ENCODE measurements at regions of chr5 and their contacts with region 1.

Region 1: GRCh38 chr5:154189819-154190594 is 526 bp upstream of the GALNT10 start:
- DNase-seq: peak; percentile 54 to 85
- H3K4me3 ChIP-seq: peak overlapping the region; percentile 70 to 89 (median 86)
- H3K27ac ChIP-seq: peak overlapping the region; percentile 74 to 93
- H3K4me1 ChIP-seq: peaks cover 0 to 12% of the 10 kb centered on the region in 2 donors
- H3K27me3 ChIP-seq: no peaks in the 10 kb centered on the region
- CTCF ChIP-seq: peak in 2 of 3 donors; percentile 10 to 32
- POLR2A ChIP-seq: no peak

Region 2: GRCh38 chr5:154176181-154176580 is 13.8 kb before region 1 on chr5:
- intact Hi-C with region 1: no loop called
- DNase-seq: no peak
- H3K4me3 ChIP-seq: no peak overlapping the region
- H3K27ac ChIP-seq: no peak overlapping the region
- H3K4me1 ChIP-seq: no peaks in the 10 kb centered on the region
- H3K27me3 ChIP-seq: no peaks in the 10 kb centered on the region
- CTCF ChIP-seq: no peak
- POLR2A ChIP-seq: no peak

Region 3: DNA sequence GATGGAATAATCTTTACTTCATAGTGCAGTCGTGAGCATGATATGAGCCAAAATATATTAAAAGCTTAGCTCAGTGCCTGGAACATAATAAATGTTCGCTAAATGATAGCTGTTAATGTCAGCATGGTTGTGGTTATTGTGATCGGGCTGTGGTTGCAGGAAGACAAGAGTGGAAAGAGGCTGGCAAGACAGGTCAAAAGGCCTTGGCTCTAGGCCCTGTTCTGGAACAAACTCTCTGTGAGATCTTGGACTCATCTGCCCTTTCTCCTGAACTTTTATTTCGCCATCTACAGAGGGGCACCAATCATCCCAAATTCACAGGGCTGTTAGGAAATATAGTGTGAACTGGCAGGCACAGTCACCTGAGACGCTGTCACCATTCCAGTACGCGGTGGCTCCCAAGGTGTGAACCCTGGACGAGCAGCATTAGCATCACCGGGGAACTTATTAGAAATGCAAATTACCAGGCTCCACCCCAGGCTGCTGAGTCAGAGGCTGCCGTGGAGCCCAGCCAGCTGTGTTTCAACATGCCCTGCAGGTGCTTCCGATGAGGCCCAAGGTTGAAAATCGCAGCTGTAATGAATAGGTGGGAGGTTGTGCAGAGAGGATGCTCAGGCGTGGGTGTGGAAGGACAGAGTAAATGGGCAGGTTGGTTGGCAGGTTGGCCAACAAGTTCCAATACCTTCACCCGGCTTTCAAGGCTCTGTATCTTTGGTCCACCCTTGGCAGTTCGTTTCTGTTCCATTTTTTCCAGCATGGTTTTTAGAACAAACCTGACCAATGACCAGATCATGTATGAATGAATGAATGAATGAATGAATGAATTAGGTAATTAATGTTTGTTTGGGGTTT is 205.6 kb after region 1 on chr5:
- intact Hi-C with region 1: loop called (anchors 10 kb)
- DNase-seq: peak in 1 of 2 donors; percentile 20
- H3K4me3 ChIP-seq: no peak overlapping the region
- H3K27ac ChIP-seq: peak overlapping the region in 1 of 2 donors; percentile 25
- H3K4me1 ChIP-seq: no peaks in the 10 kb centered on the region
- H3K27me3 ChIP-seq: no peaks in the 10 kb centered on the region
- CTCF ChIP-seq: no peak
- POLR2A ChIP-seq: no peak